Naive thymus-derived CD8-positive, alpha-beta T cell (primary cell): ENCODE measurements at regions of chr1 and their contacts with region 1.

Region 1: DNA sequence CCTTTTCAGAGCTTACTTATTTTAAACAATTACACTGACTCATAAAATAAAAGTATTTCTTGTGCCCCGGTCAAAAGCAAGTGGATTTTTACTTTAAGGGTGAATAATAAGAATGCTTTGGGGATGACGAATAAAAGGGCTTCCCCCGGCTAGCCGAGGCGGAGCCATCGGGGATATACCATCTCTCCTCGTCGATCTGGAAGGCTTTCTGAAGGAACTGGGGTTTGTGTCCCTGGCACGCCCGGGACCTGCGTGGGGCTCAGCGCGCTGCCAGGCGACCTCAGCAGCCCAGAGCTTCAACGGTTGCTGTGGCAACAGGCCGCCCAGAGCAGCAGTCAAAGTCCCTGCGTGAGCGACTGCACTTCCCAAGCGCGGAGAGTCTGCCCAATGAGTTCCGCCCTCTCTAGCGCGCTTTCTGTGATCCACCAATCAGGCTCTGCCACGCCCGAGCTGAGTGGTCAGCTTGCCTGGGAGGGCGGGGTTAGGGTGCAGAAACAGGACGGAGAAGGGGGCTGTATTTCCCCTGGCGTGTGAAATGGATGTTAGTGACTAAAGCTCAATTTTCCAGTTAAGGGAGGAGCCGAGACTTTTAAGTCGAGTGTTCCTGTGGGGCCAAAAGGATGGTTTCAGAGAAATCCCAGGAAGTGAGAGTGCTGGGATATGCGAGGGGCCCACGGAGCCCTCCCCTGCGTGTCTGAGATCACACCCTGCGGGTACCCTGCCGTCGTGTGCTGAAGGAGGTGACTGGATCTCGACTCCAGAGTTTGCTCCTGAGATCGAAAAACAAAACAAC is 33.0 kb upstream of the MGST3 start:
- DNase-seq: peak; percentile 80 to 94 (median 86)
- ATAC-seq: peak; percentile 95 to 96
- H3K4me3 Mint-ChIP-seq: peak overlapping the region; percentile 83 to 97 (median 91)
- H3K27ac Mint-ChIP-seq: peak overlapping the region; percentile 79 to 94 (median 90)
- H3K4me1 Mint-ChIP-seq: peaks cover 14 to 31% (median 22%) of the 10 kb centered on the region in 4 donors
- H3K27me3 Mint-ChIP-seq: peaks cover 12 to 44% (median 20%) of the 10 kb centered on the region in 5 donors

Region 2: GRCh38 chr1:165392634-165393571 is 205.2 kb before region 1 on chr1:
- POLR2A ChIA-PET with region 1: interaction called, 10 read pairs
- DNase-seq: peak; percentile 80 to 95 (median 89)
- ATAC-seq: peak; percentile 99 to 100
- H3K4me3 Mint-ChIP-seq: peak overlapping the region; percentile 42 to 88 (median 68)
- H3K27ac Mint-ChIP-seq: peak overlapping the region; percentile 30 to 96 (median 70)
- H3K4me1 Mint-ChIP-seq: peaks cover 11 to 21% (median 20%) of the 10 kb centered on the region in 4 donors
- H3K27me3 Mint-ChIP-seq: peaks cover 50 to 90% (median 67%) of the 10 kb centered on the region in 5 donors

Region 3: GRCh38 chr1:165630629-165631341 is 32.7 kb after region 1 on chr1 and contains the start of gene MGST3:
- POLR2A ChIA-PET with region 1: interaction called, 11 read pairs
- DNase-seq: peak; percentile 87 to 98 (median 92)
- ATAC-seq: peak; percentile 90 to 92
- H3K4me3 Mint-ChIP-seq: no peak within 1 kb of the TSS
- H3K27ac Mint-ChIP-seq: peak within 1 kb of the TSS in 2 of 10 donors; percentile 82
- H3K4me1 Mint-ChIP-seq: peaks cover 0 to 24% (median 18%) of the 10 kb centered on the region in 4 donors
- H3K27me3 Mint-ChIP-seq: no peaks in the 10 kb centered on the region
- polyA plus RNA-seq, gene MGST3: 95.3 to 160 (median 116) TPM